BJ (cell line): ENCODE measurements at regions of chr14 and their contacts with region 1.

Region 1: GRCh38 chr14:55731881-55732498 is 152.0 kb downstream of the KTN1 start:
- DNase-seq: no peak
- H3K4me3 ChIP-seq: no peak overlapping the region
- H3K27me3 ChIP-seq: peaks cover 2% of the 10 kb centered on the region; the same call in 1 of the 2 replicates
- CTCF ChIP-seq: peak; percentile 66

Region 2: GRCh38 chr14:55645145-55645544 is 86.8 kb before region 1 on chr14:
- CTCF ChIA-PET with region 1: no interaction called
- POLR2A ChIA-PET with region 1: no interaction called
- DNase-seq: no peak
- H3K4me3 ChIP-seq: no peak overlapping the region
- H3K27me3 ChIP-seq: no peaks in the 10 kb centered on the region
- CTCF ChIP-seq: no peak

Region 3: DNA sequence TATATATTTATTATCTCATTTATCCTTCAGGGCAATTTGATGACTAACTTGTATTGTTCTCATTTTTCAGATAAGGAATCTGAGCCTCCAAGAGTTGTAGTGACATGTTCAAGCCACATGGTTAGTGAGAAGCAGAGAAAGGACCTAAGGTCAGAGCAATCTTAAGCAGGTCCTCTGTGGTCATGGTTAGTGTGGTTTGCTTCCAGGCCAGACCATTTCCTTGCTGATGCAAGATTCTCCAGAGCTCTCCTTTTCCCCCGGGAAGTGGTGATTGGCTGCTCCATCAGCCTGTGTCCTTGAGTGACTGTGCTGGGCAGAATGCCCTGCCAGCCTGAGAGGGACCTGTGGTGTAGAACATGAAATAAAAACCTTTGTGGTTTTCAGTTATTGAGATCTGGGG is 10.6 kb before region 1 on chr14:
- CTCF ChIA-PET with region 1: interaction called, 27 read pairs
- POLR2A ChIA-PET with region 1: no interaction called
- DNase-seq: peak; percentile 32
- H3K4me3 ChIP-seq: no peak overlapping the region
- H3K27me3 ChIP-seq: peaks cover 4% of the 10 kb centered on the region
- CTCF ChIP-seq: no peak

Region 4: GRCh38 chr14:55743551-55743950 is 11.6 kb after region 1 on chr14:
- CTCF ChIA-PET with region 1: interaction called, 13 read pairs
- POLR2A ChIA-PET with region 1: no interaction called
- DNase-seq: no peak
- H3K4me3 ChIP-seq: no peak overlapping the region
- H3K27me3 ChIP-seq: peaks cover 2% of the 10 kb centered on the region
- CTCF ChIP-seq: no peak

Region 5: GRCh38 chr14:55780156-55780946 is 48.4 kb after region 1 on chr14:
- CTCF ChIA-PET with region 1: no interaction called
- POLR2A ChIA-PET with region 1: no interaction called
- DNase-seq: peak; percentile 25
- H3K4me3 ChIP-seq: no peak overlapping the region
- H3K27me3 ChIP-seq: no peaks in the 10 kb centered on the region
- CTCF ChIP-seq: no peak

Region 6: GRCh38 chr14:56339855-56340701 is 608.1 kb after region 1 on chr14:
- CTCF ChIA-PET with region 1: interaction called, 22 read pairs
- POLR2A ChIA-PET with region 1: no interaction called
- DNase-seq: peak; percentile 91
- H3K4me3 ChIP-seq: no peak overlapping the region
- H3K27me3 ChIP-seq: no peaks in the 10 kb centered on the region
- CTCF ChIP-seq: peak; percentile 95

Region 7: DNA sequence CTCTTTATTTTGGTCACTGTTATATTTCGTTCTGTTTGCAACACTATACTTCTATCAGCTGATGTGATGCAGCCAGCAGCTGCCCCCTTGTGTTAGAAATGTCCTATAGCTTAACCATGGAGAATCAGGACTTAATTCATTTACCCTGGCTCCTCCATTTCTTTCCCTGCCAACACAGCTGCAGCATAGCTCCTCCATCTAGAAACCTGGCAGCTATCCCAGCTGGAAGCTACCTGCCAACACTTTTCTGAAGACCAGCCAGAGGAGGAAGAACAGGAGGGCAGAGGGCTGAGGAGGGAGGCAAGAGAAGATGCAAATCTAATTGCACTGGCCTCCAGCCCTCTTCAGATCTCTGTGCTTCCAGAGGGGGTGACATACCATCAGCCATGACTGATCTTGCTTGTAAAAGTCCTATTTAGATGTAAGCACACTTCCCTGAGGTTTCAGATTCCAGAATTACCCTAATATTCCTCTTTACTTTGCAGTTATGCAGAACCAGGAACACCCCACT is 690.8 kb after region 1 on chr14:
- CTCF ChIA-PET with region 1: interaction called, 11 read pairs
- POLR2A ChIA-PET with region 1: no interaction called
- DNase-seq: no peak
- H3K4me3 ChIP-seq: no peak overlapping the region
- H3K27me3 ChIP-seq: peaks cover 2% of the 10 kb centered on the region; the same call in 1 of the 2 replicates
- CTCF ChIP-seq: peak; percentile 80